ENCODE measurements at regions of chr16 and their contacts with region 1.

Region 1: GRCh38 chr16:49876716-49877129 is 20.8 kb upstream of the ZNF423 start:
- DNase-seq: peak; percentile 85 to 92
- ATAC-seq: peak; percentile 92
- H3K4me3 ChIP-seq: peak overlapping the region in 1 of 2 donors; percentile 9
- H3K27ac ChIP-seq: no peak overlapping the region
- H3K4me1 ChIP-seq: no peaks in the 10 kb centered on the region
- H3K27me3 ChIP-seq: no peaks in the 10 kb centered on the region

Region 2: GRCh38 chr16:49036126-49036525 is 840.6 kb before region 1 on chr16:
- intact Hi-C with region 1: no loop called
- DNase-seq: no peak
- ATAC-seq: no peak
- H3K4me3 ChIP-seq: no peak overlapping the region
- H3K27ac ChIP-seq: no peak overlapping the region
- H3K4me1 ChIP-seq: no peaks in the 10 kb centered on the region
- H3K27me3 ChIP-seq: no peaks in the 10 kb centered on the region

Region 3: GRCh38 chr16:49407873-49408550 is 468.7 kb before region 1 on chr16:
- intact Hi-C with region 1: loop called (anchors 1 to 5 kb)
- DNase-seq: peak; percentile 90 to 95
- ATAC-seq: peak; percentile 92
- H3K4me3 ChIP-seq: no peak overlapping the region
- H3K27ac ChIP-seq: no peak overlapping the region
- H3K4me1 ChIP-seq: no peaks in the 10 kb centered on the region
- H3K27me3 ChIP-seq: no peaks in the 10 kb centered on the region

Region 4: GRCh38 chr16:49608779-49609178 is 267.9 kb before region 1 on chr16:
- intact Hi-C with region 1: loop called (anchors 5 to 10 kb)
- DNase-seq: peak in 1 of 2 donors; percentile 55
- ATAC-seq: peak; percentile 84
- H3K4me3 ChIP-seq: no peak overlapping the region
- H3K27ac ChIP-seq: no peak overlapping the region
- H3K4me1 ChIP-seq: no peaks in the 10 kb centered on the region
- H3K27me3 ChIP-seq: no peaks in the 10 kb centered on the region

Region 5: DNA sequence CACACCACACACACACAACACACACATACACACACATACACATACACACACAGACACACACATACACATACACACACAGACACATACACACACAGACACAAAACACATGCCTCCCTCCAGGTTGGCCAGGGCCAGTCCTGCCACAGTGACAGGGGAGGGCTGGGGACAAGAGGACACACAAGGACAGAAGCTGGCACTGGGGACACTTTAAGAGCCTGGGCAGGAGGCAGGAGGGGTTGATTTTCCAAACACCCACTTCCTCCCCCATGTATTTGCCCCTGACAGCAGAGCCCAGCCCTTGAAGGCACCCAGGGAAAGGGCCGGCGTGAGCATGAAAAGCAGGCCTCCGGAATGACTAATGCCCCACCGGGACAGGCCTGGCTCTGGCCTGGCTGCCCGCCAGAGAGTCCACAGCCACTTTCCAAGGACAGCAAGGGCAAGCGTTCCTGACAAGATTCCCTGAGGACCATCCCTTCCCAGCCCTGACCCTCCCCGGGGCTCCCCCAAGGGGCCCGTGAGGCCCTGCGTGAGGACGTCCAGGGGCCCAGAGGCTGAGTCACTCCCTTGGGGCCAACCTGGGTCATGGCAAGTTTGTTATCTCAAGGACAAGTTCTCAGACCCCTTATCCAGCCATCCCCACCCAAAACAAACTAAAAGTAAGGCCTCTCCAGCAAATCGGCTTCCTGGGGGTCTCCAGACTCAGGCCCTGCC is 256.4 kb before region 1 on chr16:
- intact Hi-C with region 1: loop called in 1 of 2 experiments (anchors 10 kb)
- DNase-seq: peak; percentile 91 to 95
- ATAC-seq: peak; percentile 86
- H3K4me3 ChIP-seq: no peak overlapping the region
- H3K27ac ChIP-seq: peak overlapping the region; percentile 68 to 86
- H3K4me1 ChIP-seq: peaks cover 0 to 5% of the 10 kb centered on the region in 2 donors
- H3K27me3 ChIP-seq: no peaks in the 10 kb centered on the region

Region 6: DNA sequence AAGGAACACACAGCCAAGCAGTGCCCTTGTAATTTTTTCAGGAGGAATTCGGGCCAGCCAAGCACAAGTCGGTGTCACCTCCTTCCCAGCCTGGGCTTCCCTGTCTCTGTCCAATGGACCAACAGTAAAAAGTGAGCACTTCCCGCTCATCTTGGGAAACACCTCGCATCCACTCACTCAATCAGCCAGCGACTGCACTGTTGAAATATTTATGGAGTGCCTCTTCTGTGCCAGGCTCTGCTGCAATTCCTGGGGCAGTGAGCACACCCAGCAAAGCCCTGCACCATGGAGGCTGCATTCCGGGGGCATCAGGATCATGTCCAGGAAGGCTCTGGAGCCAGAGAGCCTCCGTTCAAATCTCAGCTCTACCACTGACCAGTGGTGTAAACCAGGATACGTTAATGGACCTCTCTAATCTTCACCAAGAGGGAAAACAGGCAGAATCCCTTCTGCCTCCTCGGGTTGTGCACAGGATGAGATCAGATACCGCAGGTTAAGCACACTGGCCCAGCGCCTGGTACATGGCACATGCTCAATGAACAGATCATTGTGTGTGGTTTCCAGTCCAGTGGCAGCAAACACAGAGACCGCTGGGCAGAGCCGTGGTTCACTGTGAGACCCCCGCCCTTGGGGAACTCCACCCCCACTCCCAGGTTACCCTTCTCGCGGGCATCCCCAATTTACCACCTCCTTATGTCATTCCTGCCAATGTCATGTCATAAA is 215.1 kb before region 1 on chr16:
- intact Hi-C with region 1: no loop called
- DNase-seq: no peak
- ATAC-seq: no peak
- H3K4me3 ChIP-seq: no peak overlapping the region
- H3K27ac ChIP-seq: no peak overlapping the region
- H3K4me1 ChIP-seq: no peaks in the 10 kb centered on the region
- H3K27me3 ChIP-seq: no peaks in the 10 kb centered on the region

Region 7: GRCh38 chr16:49932946-49933345 is 56.2 kb after region 1 on chr16:
- intact Hi-C with region 1: no loop called
- DNase-seq: no peak
- ATAC-seq: no peak
- H3K4me3 ChIP-seq: no peak overlapping the region
- H3K27ac ChIP-seq: no peak overlapping the region
- H3K4me1 ChIP-seq: no peaks in the 10 kb centered on the region
- H3K27me3 ChIP-seq: no peaks in the 10 kb centered on the region